ENCODE measurements at regions of chr17 and their contacts with region 1.

Region 1: GRCh38 chr17:79045842-79046196 is 21.9 kb downstream of the C1QTNF1 start:
- DNase-seq: peak; percentile 93
- H3K4me3 ChIP-seq: no peak overlapping the region
- H3K27ac ChIP-seq: no peak overlapping the region
- H3K4me1 ChIP-seq: peaks cover 0 to 23% of the 10 kb centered on the region in 2 experiments; a peak in 2 of 4 replicates
- H3K27me3 ChIP-seq: no peaks in the 10 kb centered on the region
- CTCF ChIP-seq: peak; percentile 98
- EP300 ChIP-seq: no peak
- RAD21 ChIP-seq: peak; percentile 92

Region 2: GRCh38 chr17:78313735-78314648 is 731.8 kb before region 1 on chr17:
- CTCF ChIA-PET with region 1: no interaction called
- POLR2A ChIA-PET with region 1: no interaction called
- DNase-seq: peak; percentile 95
- H3K4me3 ChIP-seq: peak overlapping the region; percentile 48 to 50
- H3K27ac ChIP-seq: peak overlapping the region; percentile 18 to 99; a peak in 3 of 4 replicates
- H3K4me1 ChIP-seq: peaks cover 21 to 32% of the 10 kb centered on the region in 2 experiments; a peak in 3 of 4 replicates
- H3K27me3 ChIP-seq: no peaks in the 10 kb centered on the region
- CTCF ChIP-seq: 0 out of 2 replicates have a peak, but pooled peaks have one; percentile 8
- EP300 ChIP-seq: no peak
- RAD21 ChIP-seq: no peak

Region 3: GRCh38 chr17:78998311-78999055 is 47.3 kb before region 1 on chr17:
- CTCF ChIA-PET with region 1: interaction called, 36 read pairs
- POLR2A ChIA-PET with region 1: interaction called, 6 read pairs
- DNase-seq: peak; percentile 96
- H3K4me3 ChIP-seq: no peak overlapping the region
- H3K27ac ChIP-seq: peak overlapping the region in 1 of 2 experiments; percentile 86; a peak in 2 of 4 replicates
- H3K4me1 ChIP-seq: peaks cover 0 to 30% of the 10 kb centered on the region in 2 experiments; a peak in 1 of 4 replicates
- H3K27me3 ChIP-seq: no peaks in the 10 kb centered on the region
- CTCF ChIP-seq: no peak
- EP300 ChIP-seq: peak in 1 of 2 experiments; percentile 7; a peak in 1 of 4 replicates
- RAD21 ChIP-seq: peak; percentile 4; the same call in 1 of the 2 replicates

Region 4: DNA sequence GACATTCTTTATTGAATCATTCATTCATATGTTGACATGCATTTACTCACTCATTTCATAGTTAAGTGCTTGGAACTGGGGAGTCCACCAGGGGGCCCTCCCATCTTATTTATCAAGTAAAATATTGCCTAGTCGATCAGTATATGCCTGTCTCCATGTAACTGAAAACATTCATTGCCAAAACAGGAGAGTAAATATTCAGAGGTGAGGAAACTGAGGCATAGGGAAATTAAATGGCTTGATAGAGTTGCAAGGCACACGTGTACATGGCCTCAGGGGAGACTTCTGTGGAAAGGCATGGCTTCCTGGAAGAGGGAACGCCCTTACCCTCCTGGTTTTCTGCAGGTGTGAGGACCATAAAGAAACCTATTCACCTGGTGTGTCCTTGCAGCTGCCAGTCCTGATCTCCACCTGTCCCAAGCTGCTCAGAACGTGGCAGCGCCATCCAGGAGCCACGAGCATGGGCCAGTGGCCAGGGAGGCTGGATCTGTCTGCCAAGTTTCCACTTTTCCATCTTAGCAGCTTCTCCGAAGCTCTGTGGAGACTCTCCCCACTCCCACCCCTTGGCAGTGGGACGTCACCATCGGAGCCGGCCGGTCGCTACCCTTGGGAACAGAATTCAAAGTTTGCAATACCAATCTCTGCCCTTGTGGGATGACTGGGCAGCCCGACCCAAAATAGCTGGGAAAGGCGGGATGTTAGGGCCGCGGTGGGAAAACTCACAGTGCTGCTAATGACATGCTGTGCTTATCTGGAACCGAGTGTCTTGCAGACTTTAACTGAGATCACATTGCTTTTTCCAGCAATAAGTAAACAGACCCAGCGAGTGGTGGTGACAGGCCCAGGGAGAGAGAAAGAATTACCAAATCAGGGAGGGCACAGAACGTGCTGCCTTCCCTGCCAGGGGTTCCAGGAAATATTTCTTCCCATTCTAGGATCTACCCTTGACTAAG is 25.9 kb before region 1 on chr17:
- CTCF ChIA-PET with region 1: interaction called, 405 read pairs
- POLR2A ChIA-PET with region 1: interaction called, 4 read pairs
- DNase-seq: peak; percentile 81
- H3K4me3 ChIP-seq: no peak overlapping the region; a peak in 1 of 4 replicates
- H3K27ac ChIP-seq: no peak overlapping the region
- H3K4me1 ChIP-seq: peaks cover 3 to 12% of the 10 kb centered on the region in 2 experiments; a peak in 3 of 4 replicates
- H3K27me3 ChIP-seq: no peaks in the 10 kb centered on the region
- CTCF ChIP-seq: peak; percentile 99
- EP300 ChIP-seq: no peak
- RAD21 ChIP-seq: peak; percentile 98

Region 5: DNA sequence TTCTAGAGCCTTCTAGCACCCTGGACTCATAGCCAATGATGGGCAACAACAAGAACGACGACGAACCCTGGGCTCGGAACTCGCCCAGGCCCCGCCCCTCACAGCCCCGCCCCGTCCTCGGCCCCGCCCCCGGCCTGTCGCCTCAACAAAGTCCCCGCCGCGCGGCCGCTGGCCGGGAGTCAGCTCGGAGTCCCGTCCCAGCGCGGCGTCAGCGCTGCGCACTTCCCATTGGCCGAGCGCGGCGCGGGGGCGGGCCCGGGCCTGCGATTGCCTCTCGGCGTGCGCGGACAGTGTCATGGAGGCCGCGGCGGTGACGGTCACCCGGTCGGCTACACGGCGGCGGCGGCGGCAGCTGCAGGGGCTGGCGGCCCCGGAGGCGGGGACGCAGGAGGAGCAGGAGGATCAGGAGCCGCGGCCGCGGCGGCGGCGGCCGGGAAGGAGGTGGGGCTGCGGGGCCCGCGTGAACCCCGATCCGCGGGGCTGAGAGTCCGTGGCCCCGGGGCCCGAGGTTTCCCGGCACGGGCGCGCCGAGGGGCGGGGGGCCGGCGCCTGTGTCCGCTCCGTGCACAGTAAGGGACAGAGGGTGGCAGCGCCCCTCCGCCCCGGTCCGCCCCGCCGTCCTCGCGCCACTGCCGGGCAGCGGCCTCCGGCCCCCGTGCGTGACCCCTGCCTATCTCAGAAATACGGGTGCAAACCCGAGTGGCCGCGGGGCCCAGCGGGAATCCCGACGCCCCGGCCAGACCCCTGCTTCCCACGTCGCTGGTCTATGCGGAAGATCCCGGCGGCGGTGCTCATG is 29.0 kb after region 1 on chr17 and contains the start of gene ENGASE:
- CTCF ChIA-PET with region 1: interaction called, 529 read pairs
- POLR2A ChIA-PET with region 1: interaction called, 6 read pairs
- DNase-seq: peak; percentile 100
- H3K4me3 ChIP-seq: peak within 1 kb of the TSS; percentile 65 to 85
- H3K27ac ChIP-seq: peak within 1 kb of the TSS in 1 of 2 experiments; percentile 29; a peak in 1 of 4 replicates
- H3K4me1 ChIP-seq: peaks cover 0 to 7% of the 10 kb centered on the region in 2 experiments; a peak in 1 of 4 replicates
- H3K27me3 ChIP-seq: no peaks in the 10 kb centered on the region; the same call in 1 of the 2 replicates
- CTCF ChIP-seq: no peak
- EP300 ChIP-seq: no peak
- RAD21 ChIP-seq: no peak
- polyA plus RNA-seq, gene ENGASE: 30.1 and 30.4 TPM in 2 replicates

Region 6: GRCh38 chr17:79114458-79115301 is 68.9 kb after region 1 on chr17:
- CTCF ChIA-PET with region 1: interaction called, 17 read pairs
- POLR2A ChIA-PET with region 1: no interaction called
- DNase-seq: peak; percentile 97
- H3K4me3 ChIP-seq: no peak overlapping the region; a peak in 1 of 4 replicates
- H3K27ac ChIP-seq: peak overlapping the region in 1 of 2 experiments; percentile 40; a peak in 1 of 4 replicates
- H3K4me1 ChIP-seq: peaks cover 0 to 27% of the 10 kb centered on the region in 2 experiments; a peak in 1 of 4 replicates
- H3K27me3 ChIP-seq: peaks cover 35% of the 10 kb centered on the region
- CTCF ChIP-seq: no peak
- EP300 ChIP-seq: peak in 1 of 2 experiments; percentile 59; a peak in 2 of 4 replicates
- RAD21 ChIP-seq: no peak; the same call in 1 of the 2 replicates

Region 7: GRCh38 chr17:79188048-79188447 is 142.2 kb after region 1 on chr17:
- CTCF ChIA-PET with region 1: interaction called, 13 read pairs
- POLR2A ChIA-PET with region 1: no interaction called
- DNase-seq: peak; percentile 97
- H3K4me3 ChIP-seq: no peak overlapping the region
- H3K27ac ChIP-seq: no peak overlapping the region
- H3K4me1 ChIP-seq: peaks cover 0 to 3% of the 10 kb centered on the region in 2 experiments; a peak in 1 of 4 replicates
- H3K27me3 ChIP-seq: peaks cover 44% of the 10 kb centered on the region
- CTCF ChIP-seq: peak; percentile 63
- EP300 ChIP-seq: no peak
- RAD21 ChIP-seq: peak; percentile 92

Measured in SK-N-SH (cell line).